ENCODE measurements at regions of chr11 and their contacts with region 1.

Region 1: DNA sequence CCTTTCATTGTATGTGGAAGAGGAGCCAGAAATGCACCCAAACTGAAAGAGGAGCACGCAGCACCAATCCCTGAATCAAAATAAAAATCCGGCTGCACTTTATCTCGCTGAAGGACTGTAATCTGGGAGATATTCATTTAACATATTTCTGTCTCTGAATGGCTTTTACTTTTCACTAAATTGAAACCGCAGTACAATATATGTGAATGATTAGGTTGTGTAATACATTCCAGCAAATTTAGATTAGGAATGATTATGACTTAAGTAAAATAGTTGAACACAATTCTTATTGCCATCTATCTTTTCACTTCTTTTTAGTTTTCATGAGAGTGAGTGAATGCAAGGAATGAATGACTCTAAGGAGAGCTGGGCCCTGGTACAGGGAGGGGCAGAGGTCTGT is 232.1 kb downstream of the ST3GAL4 start:
- DNase-seq: no peak
- H3K4me3 ChIP-seq: no peak overlapping the region
- H3K27me3 ChIP-seq: no peaks in the 10 kb centered on the region
- CTCF ChIP-seq: no peak

Region 2: GRCh38 chr11:126669416-126669815 is 81.9 kb after region 1 on chr11:
- CTCF ChIA-PET with region 1: no interaction called
- POLR2A ChIA-PET with region 1: interaction called, 12 read pairs
- DNase-seq: no peak
- H3K4me3 ChIP-seq: no peak overlapping the region
- H3K27me3 ChIP-seq: no peaks in the 10 kb centered on the region
- CTCF ChIP-seq: no peak

Measured in BJ (cell line).